Activated naive CD8-positive, alpha-beta T cell treated with anti-CD3 and anti-CD28 coated beads, Interleukin-2, amount 10 ng/mL, durations not matched to agents 7 days and 5 days (primary cell): ENCODE measurements at regions of chr11 and their contacts with region 1.

Region 1: GRCh38 chr11:57527056-57527631 is 3.4 kb downstream of the TIMM10 start:
- DNase-seq: peak; percentile 75
- ATAC-seq: no peak
- H3K4me3 Mint-ChIP-seq: no peak overlapping the region
- H3K27ac Mint-ChIP-seq: peak overlapping the region; percentile 70
- H3K4me1 Mint-ChIP-seq: peaks cover 37% of the 10 kb centered on the region
- H3K27me3 Mint-ChIP-seq: no peaks in the 10 kb centered on the region

Region 2: DNA sequence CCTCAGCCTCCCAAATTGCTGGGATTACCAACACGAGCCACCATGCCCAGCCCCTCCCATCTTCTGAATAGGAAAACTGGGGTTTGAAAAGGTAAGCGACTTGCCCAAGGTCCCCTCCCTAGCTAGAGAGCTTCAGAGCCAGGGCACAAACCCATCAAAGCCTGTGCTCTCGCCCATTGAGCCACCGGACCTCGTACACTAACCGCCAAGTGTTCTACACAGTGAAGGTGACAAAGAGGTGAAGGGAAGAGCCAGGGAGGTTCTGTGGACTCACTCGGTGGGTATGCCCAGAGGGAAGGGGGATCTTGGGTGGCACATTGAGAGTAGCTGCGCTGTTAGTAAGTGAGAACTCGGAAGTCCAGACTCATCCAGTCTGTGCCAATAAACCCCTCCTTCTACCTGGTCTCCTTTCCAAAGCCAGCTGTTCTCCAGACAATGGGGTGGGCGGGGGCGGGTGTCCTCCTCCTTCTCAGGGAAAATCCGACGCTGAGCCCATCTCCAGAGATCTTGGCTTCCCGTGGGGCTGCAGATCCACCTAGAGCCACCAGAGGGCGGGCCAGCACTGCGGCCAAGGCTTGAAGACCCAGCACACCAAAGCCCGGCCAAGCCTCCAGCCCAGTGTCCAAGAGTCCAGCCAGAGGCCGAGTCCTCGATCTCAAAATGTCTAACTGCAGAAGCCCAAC is 70.0 kb before region 1 on chr11:
- POLR2A ChIA-PET with region 1: interaction called, 11 read pairs
- DNase-seq: peak; percentile 82
- ATAC-seq: peak; percentile 35
- H3K4me3 Mint-ChIP-seq: peak overlapping the region; percentile 51
- H3K27ac Mint-ChIP-seq: no peak overlapping the region
- H3K4me1 Mint-ChIP-seq: peaks cover 21% of the 10 kb centered on the region
- H3K27me3 Mint-ChIP-seq: peaks cover 48% of the 10 kb centered on the region

Region 3: GRCh38 chr11:57493507-57494503 is 33.3 kb before region 1 on chr11:
- POLR2A ChIA-PET with region 1: interaction called, 20 read pairs
- DNase-seq: peak; percentile 76
- ATAC-seq: peak; percentile 82
- H3K4me3 Mint-ChIP-seq: no peak overlapping the region
- H3K27ac Mint-ChIP-seq: peak overlapping the region; percentile 88
- H3K4me1 Mint-ChIP-seq: peaks cover 15% of the 10 kb centered on the region
- H3K27me3 Mint-ChIP-seq: no peaks in the 10 kb centered on the region

Region 4: DNA sequence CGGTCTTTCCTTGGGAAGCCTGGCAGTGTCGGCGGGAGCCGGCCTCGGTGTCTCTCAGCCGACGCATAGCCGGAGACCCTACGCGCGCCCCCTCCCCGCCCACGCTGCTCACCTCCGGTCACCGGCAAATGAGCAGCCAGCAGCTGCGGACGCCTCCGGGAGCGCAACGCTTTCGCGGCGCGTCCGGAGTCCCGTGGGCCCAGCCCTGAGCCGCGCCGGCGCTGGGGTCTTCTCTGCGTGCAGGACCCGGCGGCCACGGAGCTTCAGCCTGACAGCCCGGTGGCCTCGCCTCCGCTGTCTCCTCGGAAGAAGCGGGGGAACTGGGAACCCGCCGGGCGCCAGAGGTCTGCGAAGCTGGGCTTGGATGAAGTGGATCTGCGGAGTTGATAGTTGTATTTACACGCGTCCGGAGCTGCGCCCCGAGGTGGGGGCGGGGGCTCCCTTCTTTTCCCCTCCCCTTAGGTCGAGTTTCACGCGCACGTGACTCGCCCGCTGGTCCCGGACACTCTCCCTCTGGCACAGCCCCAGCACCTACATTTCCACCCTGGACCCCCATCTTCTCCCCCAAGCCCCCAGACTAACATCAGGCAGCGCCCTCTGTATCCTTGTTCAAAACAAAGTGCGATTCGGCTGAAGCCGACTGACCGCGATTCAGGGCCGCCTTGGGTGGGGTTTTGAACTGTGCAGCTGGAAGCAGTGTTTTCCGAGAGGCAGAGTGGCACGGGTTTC is 11.6 kb before region 1 on chr11 and contains the start of gene SLC43A1:
- POLR2A ChIA-PET with region 1: interaction called, 36 read pairs
- DNase-seq: peak; percentile 66
- ATAC-seq: peak; percentile 43
- H3K4me3 Mint-ChIP-seq: peak within 1 kb of the TSS; percentile 99
- H3K27ac Mint-ChIP-seq: peak within 1 kb of the TSS; percentile 98
- H3K4me1 Mint-ChIP-seq: peaks cover 31% of the 10 kb centered on the region
- H3K27me3 Mint-ChIP-seq: no peaks in the 10 kb centered on the region
- total RNA-seq, gene SLC43A1: 28.2 to 28.8 TPM